ENCODE measurements at regions of chr10 and their contacts with region 1.

Region 1: DNA sequence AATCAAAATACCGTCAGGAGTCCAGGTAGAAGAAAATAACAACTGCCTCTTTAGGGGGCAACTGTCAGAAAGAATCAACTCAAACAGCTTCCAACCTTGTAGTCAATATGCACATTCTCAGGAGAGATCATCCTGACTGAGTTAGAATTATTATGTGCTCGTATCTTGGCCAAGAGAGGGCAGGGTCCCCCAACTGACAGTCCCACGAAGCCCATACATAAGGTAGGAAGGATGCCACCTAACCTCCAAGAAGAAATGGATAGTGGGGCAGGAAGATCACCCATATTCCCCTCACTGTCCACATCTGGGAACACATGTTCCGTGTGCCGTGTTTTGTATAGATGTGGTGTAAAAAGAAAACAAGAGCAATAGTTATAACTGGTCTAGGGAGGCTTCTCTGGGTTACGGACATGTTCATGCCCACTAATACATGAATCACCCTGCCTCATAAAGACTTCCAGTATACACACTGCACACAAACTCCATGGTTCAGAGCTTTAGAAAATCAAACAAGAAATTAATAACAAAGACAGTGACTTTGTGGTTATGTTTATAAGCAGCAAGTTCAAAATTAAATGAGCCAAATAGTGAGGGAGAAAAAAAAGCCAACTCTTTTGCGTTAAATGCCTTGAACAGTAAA is 295.6 kb downstream of the FGFR2 start:
- DNase-seq: no peak
- H3K4me3 Mint-ChIP-seq: no peak overlapping the region
- H3K27ac Mint-ChIP-seq: peak overlapping the region; percentile 27
- H3K4me1 Mint-ChIP-seq: peaks cover 8% of the 10 kb centered on the region
- H3K27me3 Mint-ChIP-seq: no peaks in the 10 kb centered on the region
- CTCF ChIP-seq: no peak

Region 2: GRCh38 chr10:121324678-121325213 is 22.1 kb after region 1 on chr10:
- CTCF ChIA-PET with region 1: no interaction called
- intact Hi-C with region 1: loop called (anchors 2 kb)
- DNase-seq: peak; percentile 69
- H3K4me3 Mint-ChIP-seq: peak overlapping the region; percentile 36
- H3K27ac Mint-ChIP-seq: peak overlapping the region; percentile 90
- H3K4me1 Mint-ChIP-seq: peaks cover 41% of the 10 kb centered on the region
- H3K27me3 Mint-ChIP-seq: no peaks in the 10 kb centered on the region
- CTCF ChIP-seq: no peak

Region 3: GRCh38 chr10:121352231-121352855 is 49.7 kb after region 1 on chr10:
- CTCF ChIA-PET with region 1: no interaction called
- intact Hi-C with region 1: no loop called
- DNase-seq: no peak
- H3K4me3 Mint-ChIP-seq: no peak overlapping the region
- H3K27ac Mint-ChIP-seq: no peak overlapping the region
- H3K4me1 Mint-ChIP-seq: no peaks in the 10 kb centered on the region
- H3K27me3 Mint-ChIP-seq: no peaks in the 10 kb centered on the region
- CTCF ChIP-seq: no peak